Mammary epithelial cell (primary cell): ENCODE measurements at regions of chr1 and their contacts with region 1.

Region 1: DNA sequence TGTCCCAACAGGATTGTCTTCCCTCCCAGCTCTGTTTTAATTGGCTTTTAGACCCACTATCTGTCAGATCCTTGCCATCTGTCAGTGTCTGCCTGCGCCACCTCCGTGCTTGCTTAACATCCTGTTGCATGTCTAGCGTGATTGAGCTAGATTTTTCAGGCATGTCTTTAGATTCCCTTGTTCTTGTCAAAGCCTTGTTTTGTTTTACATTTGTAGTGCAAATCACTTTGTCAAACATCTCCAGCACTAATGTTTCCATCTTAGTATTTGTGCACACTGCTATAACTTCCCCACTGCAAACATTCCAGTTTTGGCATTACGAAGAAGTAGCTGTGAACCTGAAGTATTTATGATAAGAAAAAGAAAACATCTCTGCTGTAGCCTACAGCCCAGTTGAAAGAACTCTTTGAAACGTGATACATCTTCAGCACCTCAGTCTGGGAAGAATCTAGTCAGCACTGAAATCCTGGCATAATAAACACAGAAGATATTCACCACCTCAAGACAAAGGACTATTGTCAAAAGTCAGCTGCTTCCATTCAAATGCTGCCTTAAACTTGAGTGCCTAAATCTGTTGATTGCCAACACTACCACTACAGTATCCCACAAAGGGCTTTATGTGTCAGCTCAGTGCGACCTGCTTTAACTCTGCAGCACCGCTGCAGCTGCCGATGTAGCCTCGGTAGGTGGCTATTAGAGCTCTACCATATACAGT is 105.0 kb downstream of the FNBP1L start:
- DNase-seq: peak; percentile 78
- H3K4me3 ChIP-seq: peak overlapping the region in 1 of 3 experiments; percentile 4
- H3K27ac ChIP-seq: peak overlapping the region; percentile 39
- H3K4me1 ChIP-seq: peaks cover 30% of the 10 kb centered on the region
- H3K27me3 ChIP-seq: no peaks in the 10 kb centered on the region
- CTCF ChIP-seq: no peak

Region 2: GRCh38 chr1:93288558-93288957 is 264.3 kb before region 1 on chr1:
- CTCF ChIA-PET with region 1: no interaction called
- dilution Hi-C with region 1: no loop called
- in situ Hi-C with region 1: no loop called
- intact Hi-C with region 1: no loop called
- DNase-seq: no peak
- H3K4me3 ChIP-seq: no peak overlapping the region
- H3K27ac ChIP-seq: no peak overlapping the region
- H3K4me1 ChIP-seq: no peaks in the 10 kb centered on the region
- H3K27me3 ChIP-seq: no peaks in the 10 kb centered on the region
- CTCF ChIP-seq: no peak

Region 3: DNA sequence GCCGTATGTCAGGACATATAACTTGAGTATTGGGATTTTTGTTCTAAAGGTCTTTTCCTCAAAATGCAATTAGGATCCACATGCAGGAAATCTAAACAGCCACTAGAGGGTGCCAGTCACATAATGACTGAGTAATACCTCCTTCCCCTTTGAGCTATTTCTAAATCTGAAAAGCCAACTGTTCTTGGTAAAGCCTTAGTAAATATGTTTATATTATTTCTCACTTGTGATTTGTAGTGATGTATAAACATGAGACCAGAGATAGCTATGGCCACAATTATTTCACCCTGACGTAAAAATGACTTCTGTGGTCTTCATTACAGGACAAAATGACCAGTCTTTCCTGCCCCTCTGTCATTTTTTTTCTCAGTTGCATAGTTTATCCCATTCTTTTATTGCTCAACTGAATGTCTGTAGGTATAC is 248.2 kb before region 1 on chr1:
- CTCF ChIA-PET with region 1: no interaction called
- dilution Hi-C with region 1: no loop called
- in situ Hi-C with region 1: no loop called
- intact Hi-C with region 1: loop called (anchors 2 kb)
- DNase-seq: peak; percentile 49
- H3K4me3 ChIP-seq: no peak overlapping the region
- H3K27ac ChIP-seq: no peak overlapping the region
- H3K4me1 ChIP-seq: no peaks in the 10 kb centered on the region
- H3K27me3 ChIP-seq: no peaks in the 10 kb centered on the region
- CTCF ChIP-seq: peak; percentile 83 to 93

Region 4: GRCh38 chr1:93471911-93472310 is 81.0 kb before region 1 on chr1:
- CTCF ChIA-PET with region 1: no interaction called
- dilution Hi-C with region 1: loop called (anchors 10 kb)
- in situ Hi-C with region 1: no loop called
- intact Hi-C with region 1: no loop called
- DNase-seq: peak; percentile 58
- H3K4me3 ChIP-seq: no peak overlapping the region
- H3K27ac ChIP-seq: no peak overlapping the region
- H3K4me1 ChIP-seq: peaks cover 7% of the 10 kb centered on the region
- H3K27me3 ChIP-seq: no peaks in the 10 kb centered on the region
- CTCF ChIP-seq: no peak